Activated CD4-positive, alpha-beta memory T cell treated with anti-CD3 and anti-CD28 coated beads, Interleukin-2, amount 10 ng/mL, durations not matched to agents 7 days and 5 days (primary cell): ENCODE measurements at regions of chr3 and their contacts with region 1.

Region 1: DNA sequence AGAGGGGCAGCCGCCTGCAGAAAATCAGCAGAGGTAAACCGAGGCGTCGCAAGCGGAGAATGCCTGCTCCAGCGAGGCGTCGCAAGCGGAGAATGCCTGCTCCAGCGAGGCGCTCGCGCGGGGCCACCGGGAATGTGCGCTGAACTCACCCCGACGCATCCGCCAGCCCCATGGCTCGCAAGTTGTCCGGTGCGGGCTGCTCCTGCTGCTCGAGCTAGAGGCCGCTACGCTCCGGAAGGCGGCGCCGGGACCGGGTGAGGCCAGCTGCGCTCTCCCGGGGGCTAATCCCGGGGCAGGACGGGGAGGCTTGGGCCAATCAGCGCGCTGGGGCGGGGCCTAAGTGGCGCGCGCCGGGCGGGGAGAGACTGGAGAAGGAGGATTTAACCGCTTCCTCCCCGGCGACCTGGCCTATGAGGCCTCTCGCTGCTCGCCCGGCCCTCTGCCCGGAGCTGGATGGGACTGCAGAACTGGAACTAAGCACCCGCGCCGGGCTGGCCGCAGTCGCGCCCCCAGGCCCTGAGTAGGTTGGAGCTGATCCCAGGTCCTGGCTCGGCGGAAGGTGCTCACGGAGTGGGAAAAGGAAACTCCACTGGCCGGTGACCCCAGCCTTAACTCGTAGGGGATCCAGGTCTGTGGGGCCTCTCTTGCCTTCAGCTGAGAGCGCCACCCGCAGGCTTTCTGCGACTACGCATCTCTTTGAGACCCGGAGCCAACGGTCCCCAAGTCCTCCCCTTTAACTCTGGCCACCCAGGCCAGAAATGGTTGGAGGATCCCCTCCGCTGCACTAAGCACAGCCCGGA is at the start of gene SLC26A6:
- DNase-seq: peak; percentile 96
- H3K4me3 Mint-ChIP-seq: peak within 1 kb of the TSS; percentile 91
- H3K27ac Mint-ChIP-seq: peak within 1 kb of the TSS; percentile 87
- H3K4me1 Mint-ChIP-seq: peaks cover 31% of the 10 kb centered on the region
- H3K27me3 Mint-ChIP-seq: no peaks in the 10 kb centered on the region
- total RNA-seq, gene SLC26A6: 55.4 to 56.0 TPM

Region 2: GRCh38 chr3:48275292-48276015 is 360.0 kb before region 1 on chr3:
- CTCF ChIA-PET with region 1: no interaction called
- POLR2A ChIA-PET with region 1: no interaction called
- DNase-seq: no peak
- H3K4me3 Mint-ChIP-seq: no peak overlapping the region
- H3K27ac Mint-ChIP-seq: no peak overlapping the region
- H3K4me1 Mint-ChIP-seq: no peaks in the 10 kb centered on the region
- H3K27me3 Mint-ChIP-seq: no peaks in the 10 kb centered on the region

Region 3: DNA sequence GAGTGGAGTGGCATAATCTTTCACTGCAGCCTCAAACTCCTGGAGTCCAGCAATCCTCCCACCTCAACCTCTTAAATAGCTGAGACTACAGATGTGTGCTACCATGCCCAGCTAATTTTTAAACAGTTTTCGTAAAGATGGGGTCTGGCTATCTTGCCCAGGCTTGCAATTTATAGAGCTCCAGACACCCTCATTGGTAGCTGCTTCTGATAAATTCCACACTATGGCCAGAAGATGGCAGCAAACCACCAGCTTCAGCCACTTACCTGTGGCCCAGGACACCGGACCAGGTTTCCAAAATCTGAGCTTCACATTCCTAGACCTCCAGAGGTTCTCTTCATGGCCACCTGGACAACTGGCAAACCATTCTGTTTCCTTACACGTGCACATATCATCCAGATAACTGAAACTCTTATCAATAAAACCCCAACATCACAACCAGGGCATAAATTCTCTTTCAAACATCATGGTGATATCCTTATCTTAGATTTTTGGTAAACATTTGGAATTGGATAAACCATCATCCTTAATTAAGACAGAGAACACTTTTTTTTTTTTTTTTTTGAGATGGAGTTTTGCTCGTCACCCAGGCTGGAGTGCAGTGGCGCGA is 234.5 kb before region 1 on chr3:
- CTCF ChIA-PET with region 1: interaction called, 17 read pairs
- POLR2A ChIA-PET with region 1: no interaction called
- DNase-seq: peak; percentile 72
- H3K4me3 Mint-ChIP-seq: no peak overlapping the region
- H3K27ac Mint-ChIP-seq: no peak overlapping the region
- H3K4me1 Mint-ChIP-seq: peaks cover 2% of the 10 kb centered on the region
- H3K27me3 Mint-ChIP-seq: peaks cover 3% of the 10 kb centered on the region

Region 4: GRCh38 chr3:48556793-48557626 is 78.4 kb before region 1 on chr3 and contains the start of gene PFKFB4:
- CTCF ChIA-PET with region 1: interaction called, 18 read pairs
- POLR2A ChIA-PET with region 1: interaction called, 5 read pairs
- DNase-seq: peak; percentile 100
- H3K4me3 Mint-ChIP-seq: peak within 1 kb of the TSS; percentile 79
- H3K27ac Mint-ChIP-seq: peak within 1 kb of the TSS; percentile 74
- H3K4me1 Mint-ChIP-seq: peaks cover 49% of the 10 kb centered on the region
- H3K27me3 Mint-ChIP-seq: no peaks in the 10 kb centered on the region
- total RNA-seq, gene PFKFB4: 33.3 to 34.4 TPM

Region 5: GRCh38 chr3:48623851-48624547 is 11.4 kb before region 1 on chr3:
- CTCF ChIA-PET with region 1: interaction called, 4 read pairs
- POLR2A ChIA-PET with region 1: interaction called, 13 read pairs
- DNase-seq: no peak
- H3K4me3 Mint-ChIP-seq: no peak overlapping the region
- H3K27ac Mint-ChIP-seq: peak overlapping the region; percentile 45
- H3K4me1 Mint-ChIP-seq: peaks cover 11% of the 10 kb centered on the region
- H3K27me3 Mint-ChIP-seq: no peaks in the 10 kb centered on the region

Region 6: DNA sequence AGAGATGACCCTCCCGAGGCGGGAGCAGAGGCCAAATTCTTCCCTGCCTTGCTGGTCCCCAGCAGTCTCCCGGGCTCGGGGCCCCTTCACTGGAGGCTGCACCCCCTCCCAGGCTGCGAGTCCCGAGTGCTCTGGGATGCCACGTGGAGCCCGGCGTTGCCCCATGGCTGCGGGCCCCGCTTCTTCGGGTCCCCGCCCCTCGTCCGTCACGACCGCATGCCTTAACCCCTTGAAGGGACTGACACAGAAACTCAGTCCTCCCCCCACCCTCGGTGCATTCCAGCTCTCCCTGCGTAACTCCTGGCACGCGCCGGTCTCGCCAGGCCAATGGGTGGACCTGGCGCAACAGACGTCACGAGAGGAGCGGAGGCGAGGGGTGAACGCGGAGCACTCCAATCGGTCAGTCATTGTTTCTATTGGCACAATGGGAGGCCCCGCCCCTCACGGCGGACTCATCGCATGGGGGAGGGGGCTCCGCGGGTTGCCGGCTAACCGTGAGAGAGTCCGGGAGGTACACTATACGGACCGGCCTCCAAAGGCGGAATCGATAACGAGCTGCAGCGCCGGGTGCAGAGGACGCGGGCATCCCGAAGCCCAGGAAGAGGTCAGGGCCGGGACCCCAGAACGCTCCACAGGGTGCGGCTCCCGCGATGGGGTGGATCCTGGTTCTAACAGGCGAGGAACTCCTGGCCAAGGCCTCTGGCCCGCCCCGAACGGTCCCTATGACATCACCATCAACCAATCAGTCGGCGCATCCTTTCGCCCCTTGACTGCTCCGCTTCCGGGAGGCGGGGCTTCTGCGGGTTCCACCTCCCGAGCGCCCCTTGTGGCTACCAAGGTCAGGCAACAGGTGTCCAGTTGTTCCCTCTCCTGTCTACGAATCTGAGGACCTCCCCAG is 28.2 kb after region 1 on chr3:
- CTCF ChIA-PET with region 1: interaction called, 19 read pairs
- POLR2A ChIA-PET with region 1: interaction called, 25 read pairs
- DNase-seq: peak; percentile 97
- H3K4me3 Mint-ChIP-seq: peak overlapping the region; percentile 81
- H3K27ac Mint-ChIP-seq: peak overlapping the region; percentile 78
- H3K4me1 Mint-ChIP-seq: peaks cover 23% of the 10 kb centered on the region
- H3K27me3 Mint-ChIP-seq: peaks cover 4% of the 10 kb centered on the region